Gastrocnemius medialis (tissue), 4 donors: ENCODE measurements at regions of chr6 and their contacts with region 1.

Region 1: GRCh38 chr6:33732826-33733708 is 13.6 kb downstream of the IP6K3 start:
- DNase-seq: peak in 1 of 2 donors; percentile 68
- ATAC-seq: no peak
- H3K4me3 ChIP-seq: peak overlapping the region in 1 of 4 donors; percentile 22
- H3K27ac ChIP-seq: peak overlapping the region; percentile 98 to 100 (median 100)
- H3K4me1 ChIP-seq: peaks cover 84 to 89% of the 10 kb centered on the region in 2 donors
- H3K27me3 ChIP-seq: no peaks in the 10 kb centered on the region
- CTCF ChIP-seq: no peak
- POLR2A ChIP-seq: peak in 1 of 2 donors; percentile 9

Region 2: DNA sequence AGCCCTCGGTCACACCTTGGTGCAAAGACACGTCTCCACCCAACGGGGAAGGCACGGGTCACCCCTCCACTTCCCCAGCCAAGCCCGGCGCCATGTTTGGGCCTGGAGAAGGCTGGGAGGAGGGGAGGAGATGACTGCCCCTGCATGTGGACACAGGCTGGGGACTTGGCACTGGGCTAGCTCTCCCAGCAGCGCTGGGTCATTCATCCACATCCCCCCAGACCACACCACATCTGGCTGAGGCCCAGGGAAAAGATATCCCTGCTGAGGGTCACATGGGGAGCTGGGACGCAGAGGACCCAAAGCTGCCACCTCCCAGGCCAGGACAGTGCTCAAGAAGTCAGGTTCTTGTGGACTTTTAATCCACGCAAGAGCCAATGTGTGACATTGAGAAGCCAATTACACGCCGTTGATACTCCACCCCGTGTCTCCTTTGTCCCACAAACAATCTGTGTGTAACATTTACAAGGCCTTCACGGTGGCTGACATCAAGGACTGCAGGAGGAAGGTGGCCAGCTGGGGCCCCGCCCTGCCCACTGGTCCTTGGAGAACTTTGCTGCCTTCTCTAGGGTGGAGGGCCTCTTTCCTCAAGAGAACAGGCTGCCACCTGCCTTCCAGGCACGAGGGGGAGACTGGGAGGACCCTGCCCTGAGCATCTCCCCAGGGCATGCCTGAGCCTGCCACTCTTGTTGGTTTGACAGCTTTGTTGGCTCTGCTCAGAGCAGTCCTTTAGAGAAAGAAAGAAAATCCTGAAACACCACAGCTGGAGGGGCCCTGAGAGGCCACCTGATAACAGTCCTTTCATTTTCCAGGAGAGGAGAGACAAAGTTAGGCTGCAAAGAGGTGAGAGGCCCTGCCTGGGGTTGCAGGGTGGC is 18.9 kb after region 1 on chr6:
- in situ Hi-C with region 1: no loop called
- intact Hi-C with region 1: loop called (anchors 1 kb)
- DNase-seq: peak in 1 of 2 donors; percentile 53
- ATAC-seq: no peak
- H3K4me3 ChIP-seq: no peak overlapping the region
- H3K27ac ChIP-seq: peak overlapping the region; percentile 98 to 100 (median 100)
- H3K4me1 ChIP-seq: peaks cover 26 to 34% of the 10 kb centered on the region in 2 donors
- H3K27me3 ChIP-seq: no peaks in the 10 kb centered on the region
- CTCF ChIP-seq: no peak
- POLR2A ChIP-seq: no peak